ENCODE measurements at regions of chr4 and their contacts with region 1.

Region 1: DNA sequence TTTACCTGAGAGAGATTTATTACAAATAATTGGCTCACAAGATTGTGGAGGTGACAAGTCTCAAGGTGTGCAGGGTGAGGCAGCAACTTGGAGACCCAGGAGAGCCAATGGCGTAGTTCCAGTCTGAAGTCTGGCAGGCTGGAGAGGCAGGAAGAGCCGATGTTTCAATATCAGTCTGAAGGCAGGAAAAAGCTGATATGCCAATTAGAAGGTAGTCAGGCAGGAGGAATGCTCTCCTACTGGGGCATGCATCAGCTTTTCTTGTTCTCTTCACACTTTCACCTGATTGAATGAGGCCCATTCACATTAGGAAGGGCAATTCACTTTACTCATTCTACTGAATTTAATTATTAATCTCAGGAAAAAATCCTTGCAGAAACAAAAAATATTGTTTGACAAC is 1351.7 kb upstream of the ADGRL3 start:
- DNase-seq: no peak
- ATAC-seq: no peak
- H3K4me3 ChIP-seq: no peak overlapping the region
- H3K4me3 Mint-ChIP-seq: no peak overlapping the region
- H3K27ac ChIP-seq: no peak overlapping the region
- H3K27ac Mint-ChIP-seq: no peak overlapping the region
- H3K4me1 ChIP-seq: no peaks in the 10 kb centered on the region
- H3K4me1 Mint-ChIP-seq: no peaks in the 10 kb centered on the region
- H3K27me3 ChIP-seq: no peaks in the 10 kb centered on the region
- H3K27me3 Mint-ChIP-seq: no peaks in the 10 kb centered on the region

Region 2: GRCh38 chr4:59920416-59920815 is 72.0 kb after region 1 on chr4:
- CTCF ChIA-PET with region 1: no interaction called
- POLR2A ChIA-PET with region 1: no interaction called
- intact Hi-C with region 1: loop called in 1 of 2 experiments (anchors 10 kb)
- DNase-seq: no peak
- ATAC-seq: no peak
- H3K4me3 ChIP-seq: no peak overlapping the region
- H3K4me3 Mint-ChIP-seq: no peak overlapping the region
- H3K27ac ChIP-seq: no peak overlapping the region
- H3K27ac Mint-ChIP-seq: no peak overlapping the region
- H3K4me1 ChIP-seq: no peaks in the 10 kb centered on the region
- H3K4me1 Mint-ChIP-seq: no peaks in the 10 kb centered on the region
- H3K27me3 ChIP-seq: no peaks in the 10 kb centered on the region
- H3K27me3 Mint-ChIP-seq: no peaks in the 10 kb centered on the region